Gastrocnemius medialis (tissue), 4 donors: ENCODE measurements at regions of chr10 and their contacts with region 1.

Region 1: GRCh38 chr10:84264611-84265141 is 19.8 kb downstream of the RGR start:
- DNase-seq: peak; percentile 16 to 49
- ATAC-seq: peak; percentile 80 to 82
- H3K4me3 ChIP-seq: no peak overlapping the region
- H3K27ac ChIP-seq: no peak overlapping the region
- H3K4me1 ChIP-seq: no peaks in the 10 kb centered on the region
- H3K27me3 ChIP-seq: peaks cover 0 to 5% (median 2%) of the 10 kb centered on the region in 3 donors
- CTCF ChIP-seq: peak; percentile 78 to 92 (median 82)
- POLR2A ChIP-seq: no peak

Region 2: GRCh38 chr10:83248106-83248631 is 1016.5 kb before region 1 on chr10:
- in situ Hi-C with region 1: no loop called
- intact Hi-C with region 1: no loop called
- DNase-seq: no peak
- ATAC-seq: no peak
- H3K4me3 ChIP-seq: no peak overlapping the region
- H3K27ac ChIP-seq: no peak overlapping the region
- H3K4me1 ChIP-seq: no peaks in the 10 kb centered on the region
- H3K27me3 ChIP-seq: no peaks in the 10 kb centered on the region
- CTCF ChIP-seq: no peak
- POLR2A ChIP-seq: no peak

Region 3: DNA sequence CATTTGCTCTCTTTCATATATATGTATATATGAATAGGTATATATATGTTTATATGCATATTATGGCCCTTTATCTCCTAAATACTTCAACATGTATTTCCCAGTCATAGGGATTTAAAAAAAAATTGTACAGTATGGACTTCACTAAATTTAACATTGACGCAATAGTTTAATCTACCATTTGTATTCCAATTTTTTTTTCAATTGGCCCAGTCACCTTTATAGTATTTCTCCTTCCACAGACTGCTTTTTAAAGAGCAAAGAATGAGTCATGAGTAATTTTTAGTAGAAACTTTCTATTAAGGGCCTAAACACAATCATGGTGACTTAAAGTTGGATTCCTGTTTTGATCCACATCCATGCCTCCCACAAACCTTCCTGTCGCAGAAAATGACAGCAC is 84.2 kb after region 1 on chr10:
- in situ Hi-C with region 1: no loop called
- intact Hi-C with region 1: no loop called
- DNase-seq: no peak
- ATAC-seq: peak; percentile 50 to 64
- H3K4me3 ChIP-seq: no peak overlapping the region
- H3K27ac ChIP-seq: peak overlapping the region; percentile 36 to 58 (median 56)
- H3K4me1 ChIP-seq: peaks cover 23 to 37% of the 10 kb centered on the region in 2 donors
- H3K27me3 ChIP-seq: no peaks in the 10 kb centered on the region
- CTCF ChIP-seq: no peak
- POLR2A ChIP-seq: no peak

Region 4: GRCh38 chr10:84360637-84361365 is 96.1 kb after region 1 on chr10:
- in situ Hi-C with region 1: loop called in 1 of 4 experiments (anchors 10 kb)
- intact Hi-C with region 1: no loop called
- DNase-seq: no peak
- ATAC-seq: peak in 1 of 2 donors; percentile 46
- H3K4me3 ChIP-seq: peak overlapping the region; percentile 19 to 47 (median 26)
- H3K27ac ChIP-seq: peak overlapping the region in 2 of 4 donors; percentile 19 to 21
- H3K4me1 ChIP-seq: peaks cover 32 to 39% of the 10 kb centered on the region in 2 donors
- H3K27me3 ChIP-seq: no peaks in the 10 kb centered on the region
- CTCF ChIP-seq: no peak
- POLR2A ChIP-seq: no peak

Region 5: GRCh38 chr10:84531396-84531795 is 266.7 kb after region 1 on chr10:
- in situ Hi-C with region 1: loop called in 2 of 4 experiments (anchors 5 kb)
- intact Hi-C with region 1: no loop called
- DNase-seq: no peak
- ATAC-seq: no peak
- H3K4me3 ChIP-seq: no peak overlapping the region
- H3K27ac ChIP-seq: no peak overlapping the region
- H3K4me1 ChIP-seq: no peaks in the 10 kb centered on the region
- H3K27me3 ChIP-seq: no peaks in the 10 kb centered on the region
- CTCF ChIP-seq: no peak
- POLR2A ChIP-seq: no peak

Region 6: DNA sequence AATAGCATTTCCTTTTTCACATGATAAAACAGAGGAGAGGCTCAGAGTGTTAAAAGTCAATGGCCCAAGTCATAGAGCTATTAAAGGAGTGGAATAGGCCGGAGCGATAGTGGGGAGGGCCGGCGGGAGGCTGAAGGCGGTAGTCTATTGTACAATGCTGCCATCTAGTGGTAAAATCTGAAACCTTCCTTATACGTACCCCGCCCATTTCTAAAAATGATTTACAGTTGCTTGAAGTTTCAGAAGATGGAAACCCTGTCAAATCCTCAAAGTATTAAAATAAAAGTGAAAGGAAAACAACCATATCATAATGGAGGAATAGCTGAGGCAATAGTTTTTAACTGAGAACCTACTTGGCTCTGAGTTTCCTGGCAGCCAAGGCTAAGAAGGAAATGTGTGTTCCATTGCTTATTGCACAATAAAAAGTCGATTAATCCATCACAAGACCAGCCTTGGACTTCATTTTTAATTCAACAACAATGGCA is 272.8 kb after region 1 on chr10:
- in situ Hi-C with region 1: loop called (anchors 5 kb)
- intact Hi-C with region 1: loop called (anchors 1 kb)
- DNase-seq: peak in 1 of 2 donors; percentile 32
- ATAC-seq: peak; percentile 72 to 89
- H3K4me3 ChIP-seq: no peak overlapping the region
- H3K27ac ChIP-seq: no peak overlapping the region
- H3K4me1 ChIP-seq: peaks cover 0 to 4% of the 10 kb centered on the region in 2 donors
- H3K27me3 ChIP-seq: peaks cover 18 to 22% (median 22%) of the 10 kb centered on the region in 3 donors
- CTCF ChIP-seq: peak; percentile 85 to 93 (median 89)
- POLR2A ChIP-seq: no peak